A549 (cell line): ENCODE measurements at regions of chr15 and their contacts with region 1.

Region 1: GRCh38 chr15:72783563-72784237 is at the start of gene ADPGK:
- DNase-seq: peak; percentile 95 to 96
- ATAC-seq: peak; percentile 87 to 94
- H3K4me3 ChIP-seq: peak within 1 kb of the TSS; percentile 74
- H3K27ac ChIP-seq: peak within 1 kb of the TSS; percentile 86 to 93
- H3K4me1 ChIP-seq: peaks cover 16% of the 10 kb centered on the region
- CTCF ChIP-seq: no peak
- EP300 ChIP-seq: no peak
- POLR2A ChIP-seq: peak; percentile 92
- RAD21 ChIP-seq: no peak
- polyA plus RNA-seq, gene ADPGK: 94.6 and 98.3 TPM in 2 replicates

Region 2: DNA sequence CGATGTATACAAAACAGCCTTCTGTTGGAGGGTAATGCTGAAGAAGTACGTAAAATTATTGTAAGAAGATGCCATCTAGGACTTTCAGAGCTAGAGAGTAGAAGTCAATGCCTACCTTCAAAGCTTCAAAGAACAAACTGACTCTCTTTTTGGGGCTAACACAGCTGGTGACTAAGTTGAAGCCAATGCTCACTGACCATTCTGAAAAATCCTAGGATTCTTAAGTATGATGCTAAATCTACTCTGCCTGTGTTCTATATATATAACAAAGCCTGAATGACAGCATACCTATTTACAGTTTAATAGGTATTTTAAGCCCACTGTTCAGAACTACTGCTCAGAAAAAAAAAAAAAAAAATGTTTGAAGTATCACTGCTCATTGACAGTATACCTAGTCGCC is 19.0 kb before region 1 on chr15:
- CTCF ChIA-PET with region 1: interaction called, 11 read pairs
- POLR2A ChIA-PET with region 1: no interaction called
- DNase-seq: no peak
- ATAC-seq: no peak
- H3K4me3 ChIP-seq: no peak overlapping the region
- H3K27ac ChIP-seq: no peak overlapping the region
- H3K4me1 ChIP-seq: no peaks in the 10 kb centered on the region
- CTCF ChIP-seq: no peak
- EP300 ChIP-seq: no peak
- POLR2A ChIP-seq: no peak
- RAD21 ChIP-seq: no peak

Region 3: GRCh38 chr15:72796515-72797337 is 13.0 kb after region 1 on chr15:
- CTCF ChIA-PET with region 1: interaction called, 27 read pairs
- POLR2A ChIA-PET with region 1: no interaction called
- DNase-seq: peak; percentile 76 to 82
- ATAC-seq: peak; percentile 90 to 97
- H3K4me3 ChIP-seq: peak overlapping the region; percentile 73
- H3K27ac ChIP-seq: peak overlapping the region; percentile 80 to 87
- H3K4me1 ChIP-seq: peaks cover 12% of the 10 kb centered on the region; the same call in 1 of the 3 replicates
- CTCF ChIP-seq: peak; percentile 98
- EP300 ChIP-seq: no peak
- POLR2A ChIP-seq: no peak; the same call in 1 of the 2 replicates
- RAD21 ChIP-seq: peak; percentile 61 to 98

Region 4: DNA sequence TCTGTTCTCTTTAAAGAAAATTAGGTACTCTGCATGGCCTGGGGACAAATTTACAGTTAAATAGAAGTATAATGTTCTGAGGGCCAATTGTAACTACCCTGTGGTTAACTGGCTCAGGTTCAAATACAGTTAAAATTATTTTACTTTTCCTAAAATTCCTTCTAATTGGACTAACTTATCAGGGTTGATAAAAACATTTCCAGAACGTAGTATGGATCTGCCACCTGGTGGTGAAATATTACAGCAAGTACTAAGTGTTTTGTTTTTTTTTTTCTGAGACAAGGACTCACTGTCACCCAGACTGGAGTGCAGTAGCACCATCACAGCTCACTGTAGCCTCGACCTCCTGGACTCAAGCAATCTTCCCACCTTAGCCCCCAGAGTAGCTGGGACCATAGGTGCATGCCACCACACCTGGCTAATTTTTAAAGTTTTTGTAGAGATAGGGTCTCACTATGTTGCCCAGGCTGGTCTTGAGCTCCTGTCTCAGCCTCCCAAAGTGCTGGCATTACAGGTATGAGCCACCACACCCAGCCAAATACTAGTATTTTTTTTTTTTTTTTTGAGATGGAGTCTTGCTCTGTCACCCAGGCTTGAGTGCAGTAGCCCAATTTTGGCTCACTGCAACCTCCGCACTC is 297.7 kb after region 1 on chr15:
- CTCF ChIA-PET with region 1: interaction called, 13 read pairs
- POLR2A ChIA-PET with region 1: no interaction called
- DNase-seq: peak; percentile 28 to 73
- ATAC-seq: peak; percentile 85 to 87; a peak in 5 of 6 replicates
- H3K4me3 ChIP-seq: no peak overlapping the region
- H3K27ac ChIP-seq: no peak overlapping the region
- H3K4me1 ChIP-seq: peaks cover 10% of the 10 kb centered on the region
- CTCF ChIP-seq: peak; percentile 92
- EP300 ChIP-seq: no peak
- POLR2A ChIP-seq: no peak
- RAD21 ChIP-seq: peak; percentile 91 to 93